Right ventricle myocardium inferior (tissue), 1 donor: ENCODE measurements at regions of chr18 and their contacts with region 1.

Region 1: GRCh38 chr18:11553098-11553940 is 56.1 kb upstream of the SLC35G4 start:
- DNase-seq: no peak
- ATAC-seq: no peak

Region 2: DNA sequence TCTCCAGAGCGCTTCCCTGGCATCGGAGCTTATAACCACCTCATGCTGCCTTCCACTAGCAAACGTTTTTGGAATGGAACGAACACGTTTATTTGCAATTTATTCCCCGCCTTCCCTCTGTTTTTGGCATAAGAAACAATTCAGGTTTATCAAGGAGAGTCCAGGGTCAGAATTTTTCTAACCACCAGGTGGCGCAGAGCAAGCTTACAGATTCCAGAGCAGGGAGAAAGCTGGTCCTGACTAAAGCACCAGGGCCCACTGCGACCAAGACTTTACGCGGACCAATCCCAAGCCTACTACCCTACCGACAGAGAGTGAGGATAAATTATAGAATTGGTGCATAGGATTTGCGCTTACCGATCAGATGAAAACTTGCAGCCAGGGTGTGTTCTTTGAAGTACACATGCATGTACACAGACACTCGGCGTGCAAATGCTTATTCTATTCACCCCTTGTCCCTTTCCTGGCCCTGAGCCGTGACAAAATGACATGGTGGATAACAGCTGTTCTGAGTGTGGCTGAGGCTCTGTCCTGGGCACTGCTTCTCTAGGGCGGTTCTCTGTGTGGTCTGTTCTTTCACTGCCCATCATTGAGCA is 992.8 kb before region 1 on chr18:
- intact Hi-C with region 1: loop called (anchors 5 kb)
- DNase-seq: peak; percentile 65
- ATAC-seq: peak; percentile 76

Region 3: GRCh38 chr18:10841203-10841602 is 712.1 kb before region 1 on chr18:
- intact Hi-C with region 1: loop called (anchors 10 kb)
- DNase-seq: no peak
- ATAC-seq: peak; percentile 76

Region 4: DNA sequence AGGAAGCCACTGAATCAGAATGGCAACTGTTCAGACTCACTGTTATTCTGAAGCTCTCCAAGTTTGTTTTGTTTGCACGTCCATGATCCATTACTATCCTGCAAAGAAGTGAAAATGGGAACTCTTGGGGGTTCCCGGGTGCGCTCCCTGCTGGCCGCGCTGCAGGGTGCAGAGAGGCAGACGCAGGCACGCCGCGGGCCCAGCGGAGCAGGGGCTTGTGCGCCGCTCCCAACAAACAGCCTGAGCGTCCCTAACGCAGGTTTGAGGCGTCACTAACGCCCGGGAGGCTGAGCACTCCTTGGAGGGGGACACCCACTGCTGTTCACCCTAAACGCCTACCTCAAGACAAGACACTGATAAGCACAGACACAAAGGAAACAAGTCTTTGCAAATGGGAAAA is 389.7 kb before region 1 on chr18:
- intact Hi-C with region 1: loop called (anchors 10 kb)
- DNase-seq: no peak
- ATAC-seq: no peak

Region 5: GRCh38 chr18:11310476-11311086 is 242.7 kb before region 1 on chr18:
- intact Hi-C with region 1: loop called (anchors 5 kb)
- DNase-seq: no peak
- ATAC-seq: no peak